Activated CD4-positive, alpha-beta T cell treated with anti-CD3 and anti-CD28 coated beads, Interleukin-2, amount 10 ng/mL, durations not matched to agents 24 days and 14 days (primary cell): ENCODE measurements at regions of chr4 and their contacts with region 1.

Region 1: DNA sequence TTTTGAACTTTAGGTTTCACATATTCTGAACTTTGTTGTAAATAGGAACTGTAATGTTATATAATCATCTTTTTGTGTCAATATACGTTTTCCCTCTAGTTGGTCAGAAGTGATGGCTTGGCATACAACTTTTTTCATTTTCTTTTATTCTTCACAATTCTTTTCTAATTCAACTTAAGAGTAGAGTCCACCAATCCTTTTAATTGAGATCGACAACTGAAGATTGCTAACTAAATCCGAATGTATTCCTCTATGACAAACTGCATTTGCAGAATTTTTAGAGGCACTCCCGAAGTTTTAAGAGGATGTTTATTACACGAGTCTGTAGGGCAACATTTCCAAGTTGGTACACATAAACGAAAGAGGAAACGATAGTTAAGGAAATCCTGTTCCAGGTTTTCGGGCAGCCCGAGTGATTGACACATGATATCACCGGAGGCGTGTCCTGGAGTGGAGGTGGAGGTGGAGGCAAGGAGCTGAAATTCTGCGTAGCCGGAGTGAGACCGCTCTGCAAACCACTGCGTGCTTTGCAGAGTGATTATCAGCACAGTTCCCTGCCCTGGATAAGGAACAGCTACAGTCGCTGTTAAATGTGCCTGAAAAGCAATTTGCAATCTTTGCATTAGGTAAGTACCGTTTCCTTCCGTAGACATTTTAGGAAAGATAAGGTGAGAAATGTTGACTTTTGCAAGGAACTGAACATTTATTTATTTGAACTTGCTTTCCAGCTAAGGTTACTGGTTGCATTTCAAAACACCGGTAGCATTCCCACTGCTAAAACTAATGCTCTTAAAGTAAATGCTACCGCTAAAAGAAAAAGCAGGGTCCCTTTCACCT is at the start of gene SPRY1:
- DNase-seq: peak; percentile 95
- H3K4me3 Mint-ChIP-seq: peak within 1 kb of the TSS; percentile 88
- H3K27ac Mint-ChIP-seq: peak within 1 kb of the TSS; percentile 92
- H3K4me1 Mint-ChIP-seq: peaks cover 23% of the 10 kb centered on the region
- H3K27me3 Mint-ChIP-seq: peaks cover 7% of the 10 kb centered on the region
- total RNA-seq, gene SPRY1: 60.2 and 60.5 TPM in 2 replicates

Region 2: DNA sequence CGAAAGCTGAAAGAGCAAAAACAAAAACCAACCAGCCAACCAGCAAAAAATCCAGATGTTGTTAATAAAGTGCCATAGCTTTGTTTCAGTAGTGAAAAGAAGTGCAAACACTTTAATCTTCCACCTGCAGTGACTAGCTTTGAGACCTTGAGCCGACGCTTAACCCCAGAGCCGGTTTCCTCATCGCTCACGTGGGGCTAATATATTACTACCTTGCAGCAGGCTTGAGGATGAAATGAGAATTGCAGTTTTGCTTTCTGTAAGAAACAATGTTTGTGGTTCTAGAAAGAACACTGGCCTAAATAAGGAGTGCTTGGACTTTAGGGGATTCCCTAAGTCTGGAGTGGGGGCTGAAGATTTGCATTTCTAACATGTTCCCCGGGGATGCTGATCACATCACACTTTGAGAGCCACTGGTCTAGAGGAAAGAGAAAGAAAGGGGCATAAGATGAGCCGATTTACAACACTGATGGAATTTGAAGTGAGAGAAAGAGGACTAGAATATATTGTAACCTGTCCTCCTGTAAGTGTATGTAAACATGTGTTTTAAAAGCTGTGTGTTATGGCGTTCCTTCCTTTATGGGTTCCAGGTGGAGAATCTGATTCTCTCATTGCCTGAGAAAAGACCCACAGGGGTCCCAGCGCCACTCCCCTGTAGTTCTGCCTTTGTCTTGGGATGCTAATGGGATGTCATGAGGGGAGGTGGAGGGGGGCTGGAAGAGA is 568.5 kb before region 1 on chr4:
- intact Hi-C with region 1: loop called (anchors 5 kb)
- DNase-seq: peak; percentile 79
- H3K4me3 Mint-ChIP-seq: peak overlapping the region; percentile 83
- H3K27ac Mint-ChIP-seq: peak overlapping the region; percentile 94
- H3K4me1 Mint-ChIP-seq: peaks cover 24% of the 10 kb centered on the region
- H3K27me3 Mint-ChIP-seq: peaks cover 64% of the 10 kb centered on the region

Region 3: DNA sequence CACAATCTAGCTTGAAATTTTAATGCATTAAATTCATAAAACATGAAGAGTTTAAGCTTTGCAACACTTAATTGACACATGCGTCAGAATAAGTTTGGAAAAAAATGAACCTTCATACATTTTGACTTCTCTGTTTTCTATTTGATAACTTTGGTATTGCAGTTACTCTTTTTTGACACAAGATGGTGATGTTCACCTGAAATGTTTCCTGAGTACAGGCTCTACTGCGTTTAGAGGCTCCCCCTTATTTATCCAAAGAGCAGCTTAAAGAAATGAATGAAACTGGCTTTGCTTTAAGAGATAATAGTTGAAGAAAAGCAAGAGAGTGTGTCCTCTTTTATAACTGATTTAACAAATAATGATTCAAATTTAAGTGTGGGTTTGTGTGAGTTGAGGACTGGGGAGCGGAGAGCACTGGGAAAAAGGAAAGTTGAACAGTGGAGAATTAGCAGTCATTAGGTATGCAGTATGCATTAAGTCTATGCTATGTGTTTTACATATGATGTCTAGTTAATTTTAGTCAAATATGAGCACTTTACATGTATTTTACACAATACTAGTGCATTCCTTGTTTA is 293.5 kb before region 1 on chr4:
- intact Hi-C with region 1: loop called (anchors 5 kb)
- DNase-seq: no peak
- H3K4me3 Mint-ChIP-seq: no peak overlapping the region
- H3K27ac Mint-ChIP-seq: no peak overlapping the region
- H3K4me1 Mint-ChIP-seq: peaks cover 2% of the 10 kb centered on the region
- H3K27me3 Mint-ChIP-seq: no peaks in the 10 kb centered on the region

Region 4: GRCh38 chr4:123380728-123381716 is 15.5 kb before region 1 on chr4:
- intact Hi-C with region 1: no loop called
- DNase-seq: no peak
- H3K4me3 Mint-ChIP-seq: no peak overlapping the region
- H3K27ac Mint-ChIP-seq: no peak overlapping the region
- H3K4me1 Mint-ChIP-seq: peaks cover 2% of the 10 kb centered on the region
- H3K27me3 Mint-ChIP-seq: peaks cover 35% of the 10 kb centered on the region

Region 5: DNA sequence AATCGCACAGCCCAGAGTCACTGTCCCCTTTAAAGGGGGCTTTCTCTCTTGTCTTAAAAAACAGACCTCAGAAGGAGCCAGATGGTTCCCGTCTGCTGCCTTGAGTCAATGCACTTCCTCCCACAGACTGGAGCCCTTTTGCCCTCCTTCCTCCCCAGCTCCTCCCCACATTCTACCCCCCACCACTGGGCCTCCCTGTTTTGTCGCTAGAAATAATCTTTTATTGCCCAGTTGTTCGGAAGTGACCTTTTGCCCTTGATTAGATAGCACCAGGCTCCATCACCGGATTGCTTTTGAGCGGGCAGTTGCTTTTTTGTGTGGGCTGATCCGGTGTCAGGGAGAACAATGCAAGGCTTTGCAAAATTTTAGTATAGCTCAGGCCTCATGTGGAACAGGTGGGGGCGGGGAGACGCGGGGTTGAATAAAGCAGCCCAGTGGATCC is 47.8 kb after region 1 on chr4:
- intact Hi-C with region 1: loop called (anchors 1 kb)
- DNase-seq: peak; percentile 81
- H3K4me3 Mint-ChIP-seq: peak overlapping the region; percentile 82
- H3K27ac Mint-ChIP-seq: peak overlapping the region; percentile 96
- H3K4me1 Mint-ChIP-seq: peaks cover 24% of the 10 kb centered on the region
- H3K27me3 Mint-ChIP-seq: no peaks in the 10 kb centered on the region

Region 6: GRCh38 chr4:123505095-123506010 is 108.8 kb after region 1 on chr4:
- intact Hi-C with region 1: loop called (anchors 5 kb)
- DNase-seq: peak; percentile 74
- H3K4me3 Mint-ChIP-seq: peak overlapping the region; percentile 92
- H3K27ac Mint-ChIP-seq: peak overlapping the region; percentile 83
- H3K4me1 Mint-ChIP-seq: peaks cover 15% of the 10 kb centered on the region
- H3K27me3 Mint-ChIP-seq: peaks cover 38% of the 10 kb centered on the region

Region 7: GRCh38 chr4:123661080-123661737 is 264.7 kb after region 1 on chr4:
- intact Hi-C with region 1: loop called (anchors 1 kb)
- DNase-seq: no peak
- H3K4me3 Mint-ChIP-seq: no peak overlapping the region
- H3K27ac Mint-ChIP-seq: no peak overlapping the region
- H3K4me1 Mint-ChIP-seq: peaks cover 10% of the 10 kb centered on the region
- H3K27me3 Mint-ChIP-seq: peaks cover 27% of the 10 kb centered on the region